HCT116 (cell line): ENCODE measurements at regions of chr10 and their contacts with region 1.

Region 1: GRCh38 chr10:97292097-97292862 is at the start of gene ARHGAP19:
- DNase-seq: peak; percentile 98
- ATAC-seq: peak; percentile 96
- H3K4me3 ChIP-seq: peak within 1 kb of the TSS; percentile 70 to 74
- H3K27ac ChIP-seq: peak within 1 kb of the TSS; percentile 92
- H3K4me1 ChIP-seq: peaks cover 3 to 11% of the 10 kb centered on the region in 2 experiments; a peak in 2 of 4 replicates
- H3K27me3 ChIP-seq: no peaks in the 10 kb centered on the region
- CTCF ChIP-seq: peak in 2 of 3 experiments; percentile 24 to 25; a peak in 1 of 6 replicates
- POLR2A ChIP-seq: peak; percentile 58
- RAD21 ChIP-seq: no peak; the same call in 1 of the 2 replicates
- total RNA-seq, gene ARHGAP19: 36.8 TPM

Region 2: DNA sequence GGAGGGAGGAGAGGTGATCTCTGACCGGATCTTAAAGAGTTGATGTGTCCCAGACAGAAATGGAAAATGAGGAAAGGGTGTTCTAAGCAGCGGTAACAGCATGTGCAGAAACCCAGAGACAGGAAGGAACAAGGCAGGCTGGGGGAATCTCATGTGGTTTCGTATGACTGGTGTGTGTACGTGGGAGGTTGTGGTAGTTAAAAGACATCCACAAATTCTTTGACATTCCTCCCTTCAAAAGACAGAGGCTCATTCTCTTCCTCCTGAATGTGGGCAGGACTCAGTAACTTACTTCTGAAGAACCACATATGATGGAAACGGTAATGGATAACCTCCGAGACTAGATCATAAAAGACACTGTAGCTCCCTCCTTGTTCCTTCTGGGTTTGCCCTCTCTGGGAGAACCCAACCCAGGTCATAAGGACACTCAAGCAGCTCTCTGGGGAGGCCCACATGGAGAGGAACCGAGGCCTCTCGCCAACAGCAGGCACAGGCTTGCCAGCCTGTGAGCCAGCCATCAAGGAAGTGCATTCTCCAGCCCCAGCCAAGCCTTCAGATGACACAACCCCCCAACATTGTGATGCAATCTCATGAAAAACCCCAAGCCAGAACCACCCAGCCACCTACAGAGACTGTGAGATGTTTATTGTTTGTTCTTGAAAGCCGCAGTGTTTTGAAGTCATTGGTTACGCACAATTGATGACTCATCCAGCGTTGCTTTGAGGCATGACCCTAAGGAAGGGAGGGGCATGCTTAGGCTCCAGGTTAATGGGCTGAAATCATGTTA is 222.5 kb before region 1 on chr10:
- CTCF ChIA-PET with region 1: no interaction called
- POLR2A ChIA-PET with region 1: no interaction called
- RAD21 ChIA-PET with region 1: no interaction called
- intact Hi-C with region 1: no loop called
- DNase-seq: peak; percentile 68
- ATAC-seq: peak; percentile 23
- H3K4me3 ChIP-seq: no peak overlapping the region
- H3K27ac ChIP-seq: no peak overlapping the region
- H3K4me1 ChIP-seq: peaks cover 0 to 18% of the 10 kb centered on the region in 2 experiments; a peak in 2 of 4 replicates
- H3K27me3 ChIP-seq: peaks cover 6% of the 10 kb centered on the region; the same call in 1 of the 2 replicates
- CTCF ChIP-seq: no peak
- POLR2A ChIP-seq: no peak
- RAD21 ChIP-seq: no peak

Region 3: GRCh38 chr10:97278491-97278989 is 13.7 kb before region 1 on chr10:
- CTCF ChIA-PET with region 1: interaction called, 15 read pairs
- POLR2A ChIA-PET with region 1: interaction called, 3 read pairs
- RAD21 ChIA-PET with region 1: no interaction called
- intact Hi-C with region 1: no loop called
- DNase-seq: peak; percentile 33
- ATAC-seq: peak; percentile 84
- H3K4me3 ChIP-seq: no peak overlapping the region
- H3K27ac ChIP-seq: no peak overlapping the region; the same call in 1 of the 2 replicates
- H3K4me1 ChIP-seq: peaks cover 5 to 12% of the 10 kb centered on the region in 2 experiments; a peak in 2 of 4 replicates
- H3K27me3 ChIP-seq: no peaks in the 10 kb centered on the region
- CTCF ChIP-seq: peak; percentile 54 to 57 (median 56); a peak in 5 of 6 replicates
- POLR2A ChIP-seq: no peak
- RAD21 ChIP-seq: peak; percentile 71

Region 4: GRCh38 chr10:97318772-97319651 is 26.7 kb after region 1 on chr10 and contains the start of gene FRAT1:
- CTCF ChIA-PET with region 1: no interaction called
- POLR2A ChIA-PET with region 1: no interaction called
- RAD21 ChIA-PET with region 1: no interaction called
- intact Hi-C with region 1: loop called (anchors 2 kb)
- DNase-seq: peak; percentile 84
- ATAC-seq: peak; percentile 89
- H3K4me3 ChIP-seq: peak within 1 kb of the TSS; percentile 49 to 64
- H3K27ac ChIP-seq: peak within 1 kb of the TSS; percentile 85
- H3K4me1 ChIP-seq: peaks cover 0 to 8% of the 10 kb centered on the region in 2 experiments; a peak in 3 of 4 replicates
- H3K27me3 ChIP-seq: no peaks in the 10 kb centered on the region
- CTCF ChIP-seq: no peak
- POLR2A ChIP-seq: peak; percentile 52
- RAD21 ChIP-seq: no peak
- total RNA-seq, gene FRAT1: 1.7 TPM